Heart right ventricle (tissue), 16 donors: ENCODE measurements at regions of chr3 and their contacts with region 1.

Region 1: DNA sequence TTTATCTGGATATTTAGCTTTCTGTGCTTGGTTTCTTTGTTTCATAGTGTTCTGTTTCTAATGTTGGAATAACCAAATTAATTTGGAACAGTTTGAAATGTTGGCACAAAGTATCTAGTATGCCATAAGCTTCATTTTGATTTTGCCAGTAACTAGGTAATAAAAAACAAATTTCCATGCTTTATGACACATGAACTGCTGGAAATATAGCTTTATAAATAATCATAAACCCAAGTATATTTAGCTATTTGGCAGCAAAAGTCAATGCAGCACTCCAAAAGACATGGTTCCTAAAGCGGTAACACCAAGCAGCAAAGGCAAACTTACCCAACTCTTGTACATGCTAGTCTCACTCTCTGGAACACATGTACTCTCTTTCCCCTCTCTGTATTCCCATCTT is 106.0 kb upstream of the CCNL1 start:
- DNase-seq: no peak
- ATAC-seq: no peak
- H3K4me3 ChIP-seq: no peak overlapping the region
- H3K27ac ChIP-seq: no peak overlapping the region
- H3K4me1 ChIP-seq: no peaks in the 10 kb centered on the region
- H3K27me3 ChIP-seq: no peaks in the 10 kb centered on the region
- CTCF ChIP-seq: no peak

Region 2: DNA sequence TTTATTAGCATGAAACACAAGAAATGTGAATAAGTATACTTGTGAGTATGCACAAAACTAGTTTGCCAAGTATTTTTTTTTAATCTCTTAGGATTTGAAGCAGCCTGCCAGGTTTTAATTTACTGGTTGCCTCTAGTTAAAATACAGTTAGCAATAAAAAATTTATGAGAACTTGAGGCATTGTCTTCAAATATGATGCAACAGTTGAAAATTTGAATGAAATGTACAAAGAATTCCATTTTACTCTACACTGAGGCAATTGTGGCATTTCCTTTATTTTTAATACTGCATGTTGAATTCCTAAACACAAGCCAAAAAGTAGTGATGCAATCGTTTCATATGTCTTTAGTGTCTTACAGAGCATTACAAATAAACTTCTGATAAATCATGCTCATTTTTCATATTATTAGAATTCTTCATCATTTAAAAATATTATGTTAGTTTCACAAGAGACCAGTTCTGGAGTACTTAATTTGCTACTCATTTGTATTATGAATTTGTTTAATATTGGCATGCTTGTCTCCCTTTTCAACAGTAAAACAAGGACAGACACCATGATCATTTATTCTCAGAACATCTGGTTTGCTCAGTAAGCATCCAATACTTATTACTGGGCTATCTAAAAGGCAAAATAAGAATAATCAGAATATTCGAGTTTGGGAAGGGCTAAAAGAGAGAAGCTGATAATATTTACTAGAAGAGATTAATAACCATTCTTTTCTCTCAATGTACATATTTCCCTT is 45.9 kb after region 1 on chr3:
- intact Hi-C with region 1: loop called in 1 of 10 experiments (anchors 1 kb)
- DNase-seq: no peak
- ATAC-seq: peak in 1 of 8 donors; percentile 65
- H3K4me3 ChIP-seq: no peak overlapping the region
- H3K27ac ChIP-seq: peak overlapping the region in 1 of 10 donors; percentile 39
- H3K4me1 ChIP-seq: no peaks in the 10 kb centered on the region
- H3K27me3 ChIP-seq: no peaks in the 10 kb centered on the region
- CTCF ChIP-seq: no peak